Head of caudate nucleus (tissue), 42 donors: ENCODE measurements at regions of chr19 and their contacts with region 1.

Region 1: GRCh38 chr19:34241513-34242337 is 12.6 kb upstream of the GARRE1 start:
- DNase-seq: no peak

Region 2: GRCh38 chr19:34282611-34283519 is 41.1 kb after region 1 on chr19:
- intact Hi-C with region 1: no loop called
- DNase-seq: no peak

Region 3: DNA sequence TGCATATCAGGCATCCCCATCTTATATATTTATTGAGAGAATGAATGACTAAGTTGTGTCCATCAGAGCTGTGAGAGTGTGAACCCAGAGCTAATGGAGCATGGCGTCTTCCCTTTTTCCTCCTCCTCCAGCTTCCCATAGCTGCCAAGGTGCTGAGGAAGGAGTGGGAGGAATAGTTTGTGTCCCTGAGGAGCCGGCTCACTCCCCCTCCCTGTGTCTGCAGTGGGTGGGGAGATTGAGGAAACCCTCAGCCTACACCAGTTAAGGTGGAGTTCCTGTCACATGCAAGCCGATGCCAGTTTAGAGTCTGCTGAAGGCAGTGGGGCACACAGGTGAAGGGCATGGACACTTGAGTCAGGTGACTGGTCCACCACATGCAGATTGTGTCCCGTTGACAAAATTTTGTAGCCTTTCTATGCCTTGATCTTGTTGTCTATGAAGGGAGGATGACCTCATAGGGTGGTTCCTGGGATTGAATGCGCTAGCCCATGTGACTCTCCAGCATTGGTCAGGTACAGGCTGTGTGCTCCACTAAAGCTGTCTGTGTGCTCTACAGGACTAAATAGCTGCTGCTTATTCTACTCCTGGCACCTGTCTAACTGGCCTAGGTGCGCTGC is 75.7 kb after region 1 on chr19:
- intact Hi-C with region 1: no loop called
- DNase-seq: peak in 29 of 42 donors; percentile 14 to 76 (median 34)

Region 4: DNA sequence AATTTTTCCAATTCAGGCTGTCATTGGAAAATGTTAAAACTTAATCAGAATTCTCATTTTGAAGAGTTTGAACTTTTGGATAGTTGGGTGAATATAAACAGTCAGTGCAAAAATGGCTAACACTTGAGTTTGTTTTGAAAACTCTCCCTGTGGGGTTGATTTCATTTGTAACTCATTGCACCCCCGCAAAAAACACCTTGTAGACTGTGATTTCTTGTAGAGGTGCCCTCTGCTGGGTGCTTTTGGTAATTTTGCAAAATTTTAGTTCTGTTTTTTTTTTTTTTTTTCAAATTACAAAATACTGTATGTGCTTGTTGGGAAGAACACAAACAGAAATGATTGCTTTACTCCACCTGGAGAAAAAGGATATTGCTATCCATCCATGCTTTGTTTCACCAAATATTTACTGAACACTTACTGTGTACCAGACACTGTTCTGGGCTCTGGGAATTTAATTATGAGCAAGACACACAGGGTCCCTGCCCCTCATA is 95.1 kb after region 1 on chr19:
- intact Hi-C with region 1: loop called (anchors 10 kb)
- DNase-seq: peak in 6 of 42 donors; percentile 22 to 72 (median 33)